ENCODE measurements at regions of chr12 and their contacts with region 1.

Region 1: DNA sequence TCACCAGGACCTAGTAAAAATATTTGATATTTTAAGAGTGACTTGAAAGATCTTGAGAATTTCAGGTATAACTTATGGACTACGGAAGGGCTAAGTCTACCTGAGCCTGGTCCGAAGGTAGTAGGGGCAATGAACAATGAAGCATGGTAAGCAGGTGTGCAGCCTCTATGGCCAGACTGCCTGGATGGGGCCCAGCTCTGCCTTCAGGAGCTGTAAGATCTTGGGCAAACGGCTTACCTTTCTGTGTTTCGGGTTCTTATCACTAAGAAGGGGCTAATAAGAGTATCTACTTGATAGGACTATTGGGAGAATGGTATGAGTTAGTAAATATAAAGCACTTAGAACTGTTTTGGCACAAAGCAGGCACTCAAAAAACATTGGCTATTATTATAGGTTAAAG is 19.1 kb upstream of the WASHC3 start:
- DNase-seq: no peak
- ATAC-seq: no peak
- H3K4me3 ChIP-seq: no peak overlapping the region
- H3K27ac ChIP-seq: no peak overlapping the region
- H3K4me1 ChIP-seq: no peaks in the 10 kb centered on the region
- H3K27me3 ChIP-seq: no peaks in the 10 kb centered on the region
- CTCF ChIP-seq: no peak

Region 2: GRCh38 chr12:102107970-102108369 is 27.1 kb after region 1 on chr12:
- CTCF ChIA-PET with region 1: no interaction called
- POLR2A ChIA-PET with region 1: no interaction called
- intact Hi-C with region 1: loop called (anchors 2 kb)
- DNase-seq: no peak
- ATAC-seq: no peak
- H3K4me3 ChIP-seq: no peak overlapping the region
- H3K27ac ChIP-seq: no peak overlapping the region
- H3K4me1 ChIP-seq: no peaks in the 10 kb centered on the region
- H3K27me3 ChIP-seq: no peaks in the 10 kb centered on the region
- CTCF ChIP-seq: no peak

Measured in PC-3 (cell line).